Activated CD8-positive, alpha-beta T cell treated with anti-CD3 and anti-CD28 coated beads for 36 hours (primary cell): ENCODE measurements at regions of chr19 and their contacts with region 1.

Region 1: DNA sequence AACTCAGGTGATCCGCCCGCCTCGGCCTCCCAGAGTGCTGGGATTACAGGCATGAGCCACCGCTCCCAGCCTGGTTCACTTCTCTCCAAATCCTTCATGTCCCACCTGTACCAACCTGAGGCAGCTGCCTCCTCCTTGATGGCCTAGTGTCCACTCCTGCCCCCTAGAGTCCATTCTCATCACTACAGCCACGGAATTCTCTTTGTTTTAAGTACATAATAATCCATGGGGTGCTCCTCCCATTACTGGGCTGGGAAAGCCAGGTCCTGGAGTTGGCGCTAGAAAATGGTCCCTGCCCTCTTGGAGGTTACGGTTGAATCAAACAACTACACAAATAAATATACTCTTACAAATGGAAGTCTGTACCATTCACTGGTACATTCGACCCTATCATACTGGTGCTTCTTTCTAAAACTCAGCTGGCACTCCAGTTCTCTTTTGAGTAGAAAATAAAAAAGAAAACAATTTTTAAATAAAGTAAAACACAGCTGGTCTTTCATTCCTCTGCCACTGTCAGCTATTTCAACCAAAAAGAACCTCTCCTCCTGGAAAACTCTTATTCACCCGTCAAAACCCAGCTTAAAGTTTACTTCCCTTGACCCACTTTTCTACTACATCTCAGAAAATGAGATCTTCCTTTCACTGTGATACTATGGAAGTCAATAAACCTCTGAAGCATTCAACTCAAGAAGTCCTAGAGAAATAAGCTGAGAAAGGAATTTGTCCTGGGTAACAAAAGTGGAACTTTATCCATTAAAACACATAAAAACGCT is 22.4 kb upstream of the ARHGEF18 start:
- DNase-seq: peak; percentile 75
- ATAC-seq: no peak
- H3K4me3 Mint-ChIP-seq: no peak overlapping the region
- H3K27ac Mint-ChIP-seq: no peak overlapping the region
- H3K4me1 Mint-ChIP-seq: no peaks in the 10 kb centered on the region
- H3K27me3 Mint-ChIP-seq: no peaks in the 10 kb centered on the region
- CTCF ChIP-seq: peak; percentile 57

Region 2: GRCh38 chr19:7098701-7099596 is 227.3 kb before region 1 on chr19:
- CTCF ChIA-PET with region 1: interaction called, 15 read pairs
- POLR2A ChIA-PET with region 1: no interaction called
- intact Hi-C with region 1: no loop called
- DNase-seq: peak; percentile 90
- ATAC-seq: peak; percentile 93
- H3K4me3 Mint-ChIP-seq: peak overlapping the region; percentile 87
- H3K27ac Mint-ChIP-seq: peak overlapping the region; percentile 84
- H3K4me1 Mint-ChIP-seq: peaks cover 16% of the 10 kb centered on the region
- H3K27me3 Mint-ChIP-seq: no peaks in the 10 kb centered on the region
- CTCF ChIP-seq: no peak

Region 3: DNA sequence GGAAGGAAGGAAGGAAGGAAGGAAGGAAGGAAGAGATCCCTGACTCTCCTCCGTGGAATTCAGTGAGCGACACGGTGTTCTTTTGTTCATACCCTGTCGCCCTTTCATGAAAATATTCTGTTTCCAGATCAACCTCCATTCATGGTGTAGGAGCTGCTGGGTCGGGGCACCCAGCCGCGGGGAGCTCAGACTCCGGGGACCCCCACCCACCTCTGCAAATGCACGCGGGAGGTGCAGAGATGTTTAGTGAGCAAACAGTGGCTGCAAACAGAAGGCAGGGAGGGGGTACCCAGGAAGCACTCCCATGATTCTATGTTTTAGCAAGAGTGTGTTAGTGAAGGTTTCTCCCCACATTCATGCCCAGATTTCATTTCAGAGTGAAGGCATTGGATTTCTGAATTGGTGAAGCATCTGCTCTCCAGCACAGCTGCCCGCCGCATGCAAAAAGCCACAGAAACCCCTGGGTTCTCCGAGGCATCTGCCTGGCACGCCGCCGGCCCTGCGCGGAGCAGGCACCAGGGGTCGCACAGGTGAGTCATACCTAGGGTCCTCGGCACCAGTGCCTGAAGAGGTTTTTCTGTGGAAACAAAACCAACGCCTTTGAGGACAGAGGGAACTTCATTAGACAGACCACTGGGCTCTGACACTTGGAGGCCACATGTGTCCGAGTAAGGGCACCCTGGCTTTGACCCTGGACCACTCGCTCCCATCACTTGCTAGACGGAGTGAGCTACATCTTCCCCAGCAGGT is 176.2 kb before region 1 on chr19:
- CTCF ChIA-PET with region 1: interaction called, 19 read pairs
- POLR2A ChIA-PET with region 1: no interaction called
- intact Hi-C with region 1: no loop called
- DNase-seq: no peak
- ATAC-seq: no peak
- H3K4me3 Mint-ChIP-seq: no peak overlapping the region
- H3K27ac Mint-ChIP-seq: no peak overlapping the region
- H3K4me1 Mint-ChIP-seq: peaks cover 3% of the 10 kb centered on the region
- H3K27me3 Mint-ChIP-seq: no peaks in the 10 kb centered on the region
- CTCF ChIP-seq: no peak

Region 4: GRCh38 chr19:7242601-7243258 is 83.6 kb before region 1 on chr19:
- CTCF ChIA-PET with region 1: no interaction called
- POLR2A ChIA-PET with region 1: no interaction called
- intact Hi-C with region 1: no loop called
- DNase-seq: no peak
- ATAC-seq: no peak
- H3K4me3 Mint-ChIP-seq: no peak overlapping the region
- H3K27ac Mint-ChIP-seq: no peak overlapping the region
- H3K4me1 Mint-ChIP-seq: no peaks in the 10 kb centered on the region
- H3K27me3 Mint-ChIP-seq: no peaks in the 10 kb centered on the region
- CTCF ChIP-seq: no peak

Region 5: DNA sequence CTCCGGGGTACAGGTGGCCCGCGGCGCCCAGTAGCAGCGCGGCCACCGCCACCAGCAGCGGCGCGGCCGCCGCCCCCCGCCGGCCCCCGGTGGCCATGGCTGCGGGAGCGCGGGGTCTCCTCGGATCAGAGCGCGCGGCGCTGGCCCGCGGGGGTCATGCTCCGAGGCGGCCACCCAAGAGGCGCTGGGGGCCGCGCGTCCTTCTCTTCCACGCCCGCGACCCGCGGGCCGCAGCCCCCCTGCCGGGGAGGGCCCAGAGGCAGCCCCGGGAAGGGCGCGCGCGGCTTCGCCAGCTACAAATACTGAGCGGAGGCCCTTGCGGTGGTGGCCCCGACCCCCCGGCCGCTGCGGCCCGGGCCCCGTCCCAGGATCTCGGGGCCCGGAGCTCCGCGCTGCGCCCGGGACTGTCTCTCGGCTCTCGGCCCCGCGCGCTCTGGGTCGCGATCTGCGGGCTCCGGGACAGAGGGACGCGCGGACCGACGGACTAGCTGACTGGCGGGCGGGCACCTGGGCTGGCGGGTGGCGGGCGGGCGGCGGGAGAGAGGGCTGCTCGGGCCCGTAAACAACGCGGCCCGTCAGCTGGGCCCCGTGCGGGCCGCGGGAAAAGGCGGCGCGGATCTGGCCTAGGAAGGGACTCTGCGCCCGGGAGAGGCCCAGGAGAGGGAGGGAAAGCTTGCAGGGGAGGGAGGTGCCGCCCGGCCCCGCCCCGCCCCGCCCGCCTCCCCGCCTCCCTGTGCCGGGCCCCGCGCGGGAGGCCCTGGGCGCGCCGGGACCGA is 32.3 kb before region 1 on chr19 and contains the start of gene INSR:
- CTCF ChIA-PET with region 1: no interaction called
- POLR2A ChIA-PET with region 1: no interaction called
- intact Hi-C with region 1: no loop called
- DNase-seq: peak; percentile 57
- ATAC-seq: peak; percentile 95
- H3K4me3 Mint-ChIP-seq: peak within 1 kb of the TSS; percentile 68
- H3K27ac Mint-ChIP-seq: no peak within 1 kb of the TSS
- H3K4me1 Mint-ChIP-seq: peaks cover 5% of the 10 kb centered on the region
- H3K27me3 Mint-ChIP-seq: peaks cover 41% of the 10 kb centered on the region
- CTCF ChIP-seq: no peak
- total RNA-seq, gene INSR: 0.87 to 1.0 TPM

Region 6: DNA sequence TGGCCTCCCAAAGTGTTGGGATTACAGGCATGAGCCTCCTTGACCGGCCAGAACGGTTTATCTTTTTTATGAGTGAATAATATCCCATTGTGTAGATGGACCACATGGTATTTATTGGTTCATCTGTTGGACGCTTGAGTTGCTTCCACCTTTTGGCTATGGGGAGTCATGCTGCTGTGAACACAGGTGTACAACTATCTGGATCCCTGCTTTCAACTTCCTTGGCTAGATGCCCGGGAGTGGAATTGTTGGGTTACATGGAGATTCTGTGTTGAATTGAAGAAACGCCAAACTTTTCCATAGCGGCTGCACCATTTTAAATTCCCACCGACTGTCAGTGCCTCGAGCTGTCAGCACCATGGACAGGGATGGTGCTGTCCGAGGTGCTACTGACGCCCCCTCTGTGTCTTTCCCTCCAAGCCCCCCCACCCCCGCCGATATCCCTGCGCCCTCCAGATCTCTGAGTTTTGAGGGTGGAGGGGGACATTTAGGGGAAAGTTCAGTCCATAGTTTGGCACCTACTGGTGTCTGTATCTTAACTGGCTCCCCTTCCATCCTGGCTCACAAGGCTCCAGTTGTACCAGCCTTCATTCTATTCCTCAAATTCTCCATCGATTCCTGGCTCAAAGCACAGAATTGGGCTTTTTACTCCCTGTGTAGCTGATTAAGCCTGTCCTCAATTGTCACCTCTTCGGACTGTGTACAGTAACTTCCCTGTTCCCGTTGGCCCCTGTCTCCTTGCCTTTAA is 236.5 kb after region 1 on chr19:
- CTCF ChIA-PET with region 1: no interaction called
- POLR2A ChIA-PET with region 1: no interaction called
- intact Hi-C with region 1: no loop called
- DNase-seq: peak; percentile 28
- ATAC-seq: no peak
- H3K4me3 Mint-ChIP-seq: no peak overlapping the region
- H3K27ac Mint-ChIP-seq: no peak overlapping the region
- H3K4me1 Mint-ChIP-seq: no peaks in the 10 kb centered on the region
- H3K27me3 Mint-ChIP-seq: no peaks in the 10 kb centered on the region
- CTCF ChIP-seq: no peak